ENCODE measurements at regions of chr17 and their contacts with region 1.

Region 1: GRCh38 chr17:27601069-27601975 is 29.7 kb upstream of the LGALS9 start:
- DNase-seq: peak; percentile 80 to 84
- H3K4me3 ChIP-seq: no peak overlapping the region
- H3K27ac ChIP-seq: no peak overlapping the region
- H3K4me1 ChIP-seq: no peaks in the 10 kb centered on the region
- H3K27me3 ChIP-seq: no peaks in the 10 kb centered on the region
- CTCF ChIP-seq: peak; percentile 90 to 94 (median 93)
- POLR2A ChIP-seq: no peak

Region 2: GRCh38 chr17:27236717-27237315 is 364.5 kb before region 1 on chr17:
- intact Hi-C with region 1: loop called (anchors 5 kb)
- DNase-seq: peak; percentile 81 to 82
- H3K4me3 ChIP-seq: no peak overlapping the region
- H3K27ac ChIP-seq: no peak overlapping the region
- H3K4me1 ChIP-seq: peaks cover 10 to 11% of the 10 kb centered on the region in 2 donors
- H3K27me3 ChIP-seq: no peaks in the 10 kb centered on the region
- CTCF ChIP-seq: peak; percentile 78 to 95 (median 92)
- POLR2A ChIP-seq: no peak

Region 3: DNA sequence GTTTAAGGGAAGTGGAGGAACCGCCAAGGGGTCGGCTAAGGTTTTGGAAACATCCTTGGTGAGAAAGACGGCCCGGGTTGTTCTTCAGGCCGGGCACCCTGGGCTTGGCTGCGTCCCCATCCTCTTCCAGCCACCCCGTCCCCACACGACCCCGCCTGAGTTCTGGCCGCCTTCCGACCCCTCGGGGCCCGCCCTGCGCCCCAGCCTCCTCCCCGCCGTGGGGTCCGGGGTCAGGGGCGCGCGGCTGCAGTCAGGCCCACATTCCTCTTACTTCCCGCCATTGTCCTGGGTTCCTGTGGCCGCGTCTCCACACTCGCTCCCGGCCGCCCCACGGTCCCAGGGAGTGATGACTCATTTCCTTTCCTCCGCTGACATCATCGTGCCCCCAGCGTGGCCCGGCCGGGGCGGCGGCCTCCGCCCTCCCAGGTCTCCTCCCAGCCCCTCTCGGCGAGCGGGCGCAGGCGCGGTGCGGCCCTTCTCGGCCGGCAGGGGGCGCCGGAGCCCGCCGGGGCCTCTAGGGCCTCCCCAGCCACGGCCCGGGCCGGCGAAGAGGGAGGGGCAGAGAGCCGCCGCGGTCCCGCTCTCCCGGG is 247.8 kb before region 1 on chr17:
- intact Hi-C with region 1: loop called (anchors 2 kb)
- DNase-seq: peak; percentile 88 to 92
- H3K4me3 ChIP-seq: peak overlapping the region; percentile 48 to 63 (median 51)
- H3K27ac ChIP-seq: peak overlapping the region; percentile 86 to 93 (median 91)
- H3K4me1 ChIP-seq: peaks cover 11 to 12% of the 10 kb centered on the region in 2 donors
- H3K27me3 ChIP-seq: no peaks in the 10 kb centered on the region
- CTCF ChIP-seq: peak; percentile 17 to 99 (median 98)
- POLR2A ChIP-seq: peak; percentile 50 to 91

Region 4: DNA sequence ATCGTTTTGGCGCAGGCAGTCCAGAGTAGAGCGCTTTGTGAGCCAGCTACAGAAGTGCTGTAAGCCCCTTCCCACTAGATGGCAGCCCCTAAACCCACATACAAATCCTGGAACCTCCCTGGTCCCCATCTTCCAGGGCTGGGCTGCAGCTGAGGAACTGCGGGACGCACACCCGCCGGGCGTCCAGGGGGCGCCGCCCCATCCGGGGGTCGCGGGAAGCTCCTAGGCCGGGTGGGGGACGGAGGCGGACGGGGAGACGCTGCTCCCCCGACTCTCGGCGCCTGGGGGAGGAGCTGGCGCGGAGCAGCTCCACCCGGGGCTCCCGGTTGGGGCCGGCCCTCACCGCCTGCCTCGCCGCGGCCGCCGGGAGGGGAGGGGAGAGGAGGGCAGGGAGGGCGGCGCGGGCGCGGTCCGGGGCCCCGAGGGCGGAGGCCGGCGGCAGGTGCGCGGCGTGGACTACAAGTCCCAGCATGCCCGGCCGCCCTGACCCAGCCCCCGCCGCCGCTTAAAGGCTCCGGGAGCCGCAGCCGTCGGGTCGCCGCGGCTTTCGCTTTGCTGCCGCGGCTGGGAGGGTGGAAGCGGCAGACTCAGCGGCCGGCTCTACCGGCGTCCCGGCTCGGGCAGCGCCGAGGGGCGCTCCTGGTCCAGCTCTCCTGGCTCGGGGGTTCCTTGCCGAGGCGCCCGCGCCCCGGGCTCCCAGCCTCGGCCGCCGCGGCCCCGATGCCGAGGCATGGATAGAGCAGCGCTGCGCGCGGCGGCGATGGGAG is 145.2 kb before region 1 on chr17 and contains the start of gene KSR1:
- intact Hi-C with region 1: loop called (anchors 10 kb)
- DNase-seq: peak; percentile 90 to 92
- H3K4me3 ChIP-seq: peak within 1 kb of the TSS; percentile 19 to 77 (median 41)
- H3K27ac ChIP-seq: peak within 1 kb of the TSS; percentile 83 to 92 (median 85)
- H3K4me1 ChIP-seq: peaks cover 27 to 44% of the 10 kb centered on the region in 2 donors
- H3K27me3 ChIP-seq: no peaks in the 10 kb centered on the region
- CTCF ChIP-seq: peak in 3 of 6 experiments; percentile 37 to 51 (median 38)
- POLR2A ChIP-seq: peak; percentile 80 to 95
- total RNA-seq, gene KSR1: 35.9 to 75.5 (median 67.7) TPM

Region 5: DNA sequence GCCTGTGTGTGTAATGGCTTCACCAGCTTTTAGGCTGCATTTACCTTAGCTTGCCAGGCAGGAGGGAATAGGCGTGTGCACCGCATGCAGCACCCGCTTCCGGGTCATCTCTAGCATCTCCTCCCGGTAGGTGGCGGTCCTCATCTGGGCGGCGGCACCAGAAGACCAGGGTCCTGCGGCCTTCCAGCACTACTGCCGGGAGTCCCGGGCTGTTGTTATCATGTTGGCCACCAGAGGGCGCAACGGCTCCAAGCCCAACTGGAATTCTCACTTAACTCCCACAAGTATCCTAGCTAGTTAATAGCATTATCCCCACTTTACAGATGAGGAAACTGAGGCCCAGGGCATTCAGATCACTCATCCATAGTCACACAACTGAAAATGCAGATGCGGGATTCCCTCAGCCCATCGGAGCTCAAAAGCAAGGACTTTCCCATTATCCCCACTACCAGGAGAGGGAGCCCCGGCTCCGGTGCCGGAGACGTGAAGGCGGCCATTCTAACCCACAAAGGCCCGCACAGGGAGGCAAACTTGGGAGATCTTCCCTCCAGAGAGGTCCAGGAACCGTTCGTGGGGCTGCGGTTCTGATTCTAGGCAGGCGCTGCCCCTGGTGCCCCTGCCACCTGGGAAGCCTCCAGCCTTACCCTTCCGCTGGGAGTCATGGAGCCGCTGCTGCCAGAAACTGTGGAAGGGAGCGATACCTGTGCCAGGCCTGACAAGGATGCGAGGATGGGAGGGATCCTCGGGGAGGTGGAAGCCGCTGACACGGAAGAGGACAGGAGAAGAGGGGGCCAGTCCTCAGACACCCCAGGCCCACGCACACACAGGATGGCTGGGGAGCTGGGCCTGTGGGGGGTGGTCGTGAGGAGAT is 53.6 kb after region 1 on chr17:
- intact Hi-C with region 1: loop called (anchors 5 kb)
- DNase-seq: peak; percentile 64 to 68
- H3K4me3 ChIP-seq: no peak overlapping the region
- H3K27ac ChIP-seq: no peak overlapping the region
- H3K4me1 ChIP-seq: no peaks in the 10 kb centered on the region
- H3K27me3 ChIP-seq: no peaks in the 10 kb centered on the region
- CTCF ChIP-seq: peak; percentile 74 to 88 (median 81)
- POLR2A ChIP-seq: no peak

Measured in thyroid gland (tissue), 4 donors.